GM12878 (cell line): ENCODE measurements at regions of chr20 and their contacts with region 1.

Region 1: DNA sequence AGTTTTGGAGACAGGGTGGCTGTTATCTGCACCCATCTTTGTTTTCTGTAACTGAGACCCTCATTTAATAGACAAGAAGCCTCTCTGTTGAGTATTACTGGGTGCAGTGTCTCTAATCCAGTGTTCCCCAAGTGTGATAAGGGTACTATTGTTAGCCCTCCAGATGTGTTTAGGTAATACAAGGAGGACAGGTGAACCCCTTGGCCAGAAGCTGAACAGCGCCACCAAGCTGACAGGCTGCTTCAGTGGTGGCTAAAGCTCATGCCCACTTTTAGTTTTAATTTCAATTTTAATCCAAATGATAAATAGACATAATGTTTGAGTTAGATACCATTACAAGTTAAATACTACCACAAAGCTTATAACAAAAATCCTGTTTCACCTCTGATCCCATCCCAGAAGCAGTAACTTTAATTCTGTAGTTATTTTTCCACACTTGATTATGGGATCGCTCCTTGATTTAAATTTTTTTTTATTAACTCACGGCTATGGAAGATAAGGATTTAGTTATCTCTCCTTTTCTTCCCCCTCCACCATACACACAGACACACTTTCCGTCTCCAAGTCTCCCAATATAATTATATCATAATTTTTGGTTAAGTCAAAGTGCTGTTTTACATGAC is 8.4 kb upstream of the STK35 start:
- DNase-seq: no peak
- ATAC-seq: peak; percentile 86
- H3K4me3 ChIP-seq: no peak overlapping the region
- H3K27ac ChIP-seq: no peak overlapping the region
- H3K4me1 ChIP-seq: no peaks in the 10 kb centered on the region; the same call in 1 of the 2 replicates
- H3K27me3 ChIP-seq: peaks cover 0 to 1% of the 10 kb centered on the region in 2 experiments; a peak in 2 of 4 replicates
- CTCF ChIP-seq: peak; percentile 58 to 66 (median 59)
- EP300 ChIP-seq: no peak
- POLR2A ChIP-seq: no peak
- RAD21 ChIP-seq: peak; percentile 50

Region 2: DNA sequence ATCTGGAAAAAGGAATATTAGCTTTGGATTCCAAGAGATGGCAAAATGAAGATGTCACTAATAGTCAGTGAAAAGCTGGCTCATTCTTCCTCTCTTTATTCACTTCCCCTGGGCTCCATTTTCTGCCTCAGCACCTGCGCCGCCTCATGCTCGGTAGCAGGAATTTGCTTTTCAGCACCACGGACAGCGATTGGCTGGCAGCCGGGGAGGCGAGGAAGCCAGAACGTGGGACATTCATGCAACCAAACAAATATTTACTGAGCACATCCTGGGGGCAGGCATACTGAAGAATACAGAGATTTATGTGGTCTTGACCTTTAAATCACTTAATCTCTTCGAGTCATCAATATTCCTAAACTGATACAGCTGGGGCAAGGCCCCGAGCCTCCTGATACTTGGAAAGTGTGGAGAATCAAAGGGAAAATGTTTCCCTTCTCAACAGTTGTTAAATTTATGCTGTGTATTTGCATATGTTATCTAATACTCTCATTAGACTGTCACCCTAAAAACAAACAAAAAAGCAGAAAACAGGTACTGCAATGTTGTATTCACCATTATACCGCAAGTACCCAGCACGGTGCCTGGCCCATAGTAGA is 87.3 kb before region 1 on chr20:
- CTCF ChIA-PET with region 1: interaction called, 17 read pairs
- POLR2A ChIA-PET with region 1: no interaction called
- RAD21 ChIA-PET with region 1: interaction called, 3 read pairs
- SMC1A ChIA-PET with region 1: interaction called, 5 read pairs
- in situ Hi-C with region 1: no loop called
- intact Hi-C with region 1: no loop called
- DNase-seq: no peak
- ATAC-seq: peak; percentile 73
- H3K4me3 ChIP-seq: no peak overlapping the region
- H3K27ac ChIP-seq: no peak overlapping the region
- H3K4me1 ChIP-seq: no peaks in the 10 kb centered on the region
- H3K27me3 ChIP-seq: no peaks in the 10 kb centered on the region; a peak in 2 of 4 replicates
- CTCF ChIP-seq: 0 out of 6 replicates have a peak, but pooled peaks of 1 of the 3 experiments have one; percentile 1
- EP300 ChIP-seq: no peak
- POLR2A ChIP-seq: no peak
- RAD21 ChIP-seq: 0 out of 2 replicates have a peak, but pooled peaks have one; percentile 3

Region 3: GRCh38 chr20:2109425-2110210 is 16.3 kb after region 1 on chr20:
- CTCF ChIA-PET with region 1: interaction called, 19 read pairs
- POLR2A ChIA-PET with region 1: interaction called, 3 read pairs
- RAD21 ChIA-PET with region 1: no interaction called
- SMC1A ChIA-PET with region 1: interaction called, 4 read pairs
- in situ Hi-C with region 1: no loop called
- intact Hi-C with region 1: no loop called
- DNase-seq: no peak
- ATAC-seq: no peak
- H3K4me3 ChIP-seq: no peak overlapping the region
- H3K27ac ChIP-seq: no peak overlapping the region
- H3K4me1 ChIP-seq: peaks cover 16% of the 10 kb centered on the region
- H3K27me3 ChIP-seq: no peaks in the 10 kb centered on the region
- CTCF ChIP-seq: no peak
- EP300 ChIP-seq: no peak
- POLR2A ChIP-seq: no peak
- RAD21 ChIP-seq: no peak

Region 4: DNA sequence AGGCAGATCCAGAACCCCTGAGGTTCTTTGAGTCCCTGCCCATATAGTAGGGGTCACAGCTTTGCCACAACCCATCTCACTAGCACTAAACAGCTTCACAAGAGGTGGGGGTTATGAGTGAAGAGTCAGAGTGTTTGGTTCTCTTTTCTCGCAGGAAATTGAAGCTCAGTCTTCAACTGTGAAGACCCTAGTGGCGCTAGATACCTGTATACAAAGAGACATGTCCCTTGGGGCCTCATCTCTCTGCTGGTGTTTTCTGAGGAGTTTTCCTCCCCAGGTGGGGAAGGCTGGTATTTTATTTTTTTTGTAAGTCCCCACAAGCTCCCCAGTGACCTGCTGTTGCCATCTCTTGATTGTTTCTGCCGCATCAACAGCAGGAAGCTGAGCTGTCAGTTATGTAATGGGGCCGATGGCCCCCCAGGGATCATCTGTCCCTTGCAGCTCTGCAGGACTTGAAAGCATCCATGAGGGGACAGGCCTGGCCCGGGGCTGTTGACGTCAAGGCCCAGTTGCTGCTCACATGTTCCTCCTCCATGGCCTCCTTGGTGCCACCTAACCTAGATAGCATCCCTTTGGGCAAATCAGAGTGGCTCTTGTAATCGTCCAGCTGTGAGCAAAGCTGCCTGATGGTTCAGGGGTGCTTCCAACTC is 31.4 kb after region 1 on chr20:
- CTCF ChIA-PET with region 1: interaction called, 11 read pairs
- POLR2A ChIA-PET with region 1: interaction called, 3 read pairs
- RAD21 ChIA-PET with region 1: no interaction called
- SMC1A ChIA-PET with region 1: interaction called, 5 read pairs
- in situ Hi-C with region 1: no loop called
- intact Hi-C with region 1: no loop called
- DNase-seq: no peak
- ATAC-seq: peak; percentile 67
- H3K4me3 ChIP-seq: no peak overlapping the region
- H3K27ac ChIP-seq: no peak overlapping the region
- H3K4me1 ChIP-seq: no peaks in the 10 kb centered on the region; the same call in 1 of the 2 replicates
- H3K27me3 ChIP-seq: no peaks in the 10 kb centered on the region
- CTCF ChIP-seq: 0 out of 6 replicates have a peak, but pooled peaks of 1 of the 3 experiments have one; percentile 5
- EP300 ChIP-seq: no peak
- POLR2A ChIP-seq: no peak
- RAD21 ChIP-seq: no peak